PC-9 (cell line): ENCODE measurements at regions of chr1 and their contacts with region 1.

Region 1: DNA sequence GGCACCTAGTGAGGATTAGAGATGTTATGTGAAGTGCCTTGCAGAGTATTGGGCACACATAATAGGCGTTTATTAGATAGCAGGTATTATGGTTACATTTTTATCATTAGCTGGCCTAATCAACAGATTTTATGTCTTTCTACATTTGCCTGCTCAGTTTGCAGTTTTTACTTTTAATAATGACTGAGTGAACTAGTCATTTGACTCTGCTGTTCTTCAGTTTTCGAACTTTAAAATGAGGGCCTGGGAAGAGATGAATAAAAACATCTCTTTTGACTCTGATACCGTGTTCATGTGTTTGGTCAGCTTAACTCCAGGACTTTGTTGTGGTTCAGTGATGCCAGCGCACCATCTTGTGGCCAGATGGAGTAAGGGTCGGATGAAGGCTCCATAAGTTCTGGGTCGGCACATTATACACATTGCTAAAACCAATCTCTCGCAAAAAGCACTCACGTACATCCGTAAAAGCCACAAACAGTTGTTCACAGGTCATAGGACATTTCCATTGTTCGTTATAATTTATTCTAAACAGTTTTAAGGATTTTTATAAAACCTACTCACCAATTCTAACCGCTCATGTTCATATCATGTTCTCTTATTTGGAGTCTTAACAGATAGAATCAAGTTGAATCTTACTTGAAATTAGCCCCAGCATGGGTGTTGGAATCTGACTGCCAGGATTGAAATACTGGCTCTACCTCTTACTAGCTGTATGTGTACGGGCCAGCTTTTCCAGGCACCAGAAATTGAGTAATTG is 78.4 kb upstream of the GPR88 start:
- DNase-seq: peak; percentile 65 to 66
- H3K4me3 ChIP-seq: no peak overlapping the region
- H3K27ac ChIP-seq: no peak overlapping the region
- H3K4me1 ChIP-seq: no peaks in the 10 kb centered on the region
- H3K27me3 ChIP-seq: no peaks in the 10 kb centered on the region
- CTCF ChIP-seq: peak; percentile 94

Region 2: GRCh38 chr1:99808391-99809115 is 651.0 kb before region 1 on chr1:
- CTCF ChIA-PET with region 1: interaction called, 4 read pairs
- POLR2A ChIA-PET with region 1: no interaction called
- intact Hi-C with region 1: loop called (anchors 1 kb)
- DNase-seq: peak; percentile 27 to 83
- H3K4me3 ChIP-seq: peak overlapping the region; percentile 4; the same call in 1 of the 2 replicates
- H3K27ac ChIP-seq: no peak overlapping the region
- H3K4me1 ChIP-seq: no peaks in the 10 kb centered on the region; the same call in 1 of the 2 replicates
- H3K27me3 ChIP-seq: peaks cover 16% of the 10 kb centered on the region; the same call in 1 of the 2 replicates
- CTCF ChIP-seq: peak; percentile 92

Region 3: DNA sequence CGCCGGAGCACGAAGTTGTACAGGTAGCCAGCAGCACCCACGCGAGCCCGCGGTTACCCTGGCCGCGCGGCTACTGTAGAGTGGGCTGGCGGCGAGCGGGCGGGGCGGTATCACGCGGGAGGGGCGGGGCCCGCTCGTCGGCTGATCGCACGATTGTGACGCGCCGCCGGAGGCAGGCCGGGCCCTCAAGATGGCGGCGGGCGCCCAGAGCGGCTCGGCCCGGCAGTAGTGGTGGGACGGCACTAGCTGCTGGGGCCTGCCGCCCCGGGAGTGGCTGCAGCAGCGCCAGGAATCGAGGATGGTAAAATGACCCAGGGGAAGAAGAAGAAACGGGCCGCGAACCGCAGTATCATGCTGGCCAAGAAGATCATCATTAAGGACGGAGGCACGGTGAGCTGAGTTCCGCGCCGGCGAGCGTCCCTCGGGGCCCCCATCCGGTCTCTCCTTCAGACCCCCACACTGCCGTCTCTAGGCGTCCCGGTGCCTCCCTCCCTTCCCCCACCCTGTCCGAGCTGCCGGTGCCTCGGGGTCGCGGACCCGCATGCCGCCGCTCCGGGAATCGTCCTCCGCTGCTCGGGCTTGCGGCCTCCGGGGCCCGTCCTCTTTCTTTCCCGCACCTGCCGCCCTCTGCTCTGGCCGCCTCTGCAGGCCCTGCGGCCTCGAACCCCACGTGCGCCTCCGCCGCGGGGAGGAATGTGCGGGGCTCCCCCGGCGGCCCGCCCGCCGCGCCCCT is 421.4 kb before region 1 on chr1:
- CTCF ChIA-PET with region 1: interaction called, 3 read pairs
- POLR2A ChIA-PET with region 1: no interaction called
- intact Hi-C with region 1: loop called (anchors 2 kb)
- DNase-seq: peak; percentile 73 to 83
- H3K4me3 ChIP-seq: peak overlapping the region; percentile 90
- H3K27ac ChIP-seq: peak overlapping the region; percentile 84
- H3K4me1 ChIP-seq: peaks cover 33% of the 10 kb centered on the region
- H3K27me3 ChIP-seq: no peaks in the 10 kb centered on the region
- CTCF ChIP-seq: no peak; the same call in 1 of the 2 replicates

Region 4: GRCh38 chr1:100249537-100250257 is 209.8 kb before region 1 on chr1 and contains the start of gene DBT:
- CTCF ChIA-PET with region 1: no interaction called
- POLR2A ChIA-PET with region 1: no interaction called
- intact Hi-C with region 1: loop called (anchors 1 kb)
- DNase-seq: peak; percentile 91 to 97
- H3K4me3 ChIP-seq: peak within 1 kb of the TSS; percentile 62
- H3K27ac ChIP-seq: peak within 1 kb of the TSS; percentile 37
- H3K4me1 ChIP-seq: peaks cover 16% of the 10 kb centered on the region
- H3K27me3 ChIP-seq: no peaks in the 10 kb centered on the region
- CTCF ChIP-seq: no peak
- total RNA-seq, gene DBT: 13.9 and 16.0 TPM in 2 replicates

Region 5: GRCh38 chr1:100404821-100405220 is 54.7 kb before region 1 on chr1:
- CTCF ChIA-PET with region 1: no interaction called
- POLR2A ChIA-PET with region 1: interaction called, 15 read pairs
- intact Hi-C with region 1: no loop called
- DNase-seq: no peak
- H3K4me3 ChIP-seq: no peak overlapping the region
- H3K27ac ChIP-seq: no peak overlapping the region
- H3K4me1 ChIP-seq: no peaks in the 10 kb centered on the region
- H3K27me3 ChIP-seq: no peaks in the 10 kb centered on the region
- CTCF ChIP-seq: no peak

Region 6: GRCh38 chr1:100482167-100482566 is 22.6 kb after region 1 on chr1:
- CTCF ChIA-PET with region 1: no interaction called
- POLR2A ChIA-PET with region 1: no interaction called
- intact Hi-C with region 1: no loop called
- DNase-seq: no peak
- H3K4me3 ChIP-seq: no peak overlapping the region
- H3K27ac ChIP-seq: no peak overlapping the region
- H3K4me1 ChIP-seq: 0 out of 2 replicates have a peak, but pooled peaks cover 6% of the 10 kb centered on the region
- H3K27me3 ChIP-seq: no peaks in the 10 kb centered on the region
- CTCF ChIP-seq: no peak

Region 7: DNA sequence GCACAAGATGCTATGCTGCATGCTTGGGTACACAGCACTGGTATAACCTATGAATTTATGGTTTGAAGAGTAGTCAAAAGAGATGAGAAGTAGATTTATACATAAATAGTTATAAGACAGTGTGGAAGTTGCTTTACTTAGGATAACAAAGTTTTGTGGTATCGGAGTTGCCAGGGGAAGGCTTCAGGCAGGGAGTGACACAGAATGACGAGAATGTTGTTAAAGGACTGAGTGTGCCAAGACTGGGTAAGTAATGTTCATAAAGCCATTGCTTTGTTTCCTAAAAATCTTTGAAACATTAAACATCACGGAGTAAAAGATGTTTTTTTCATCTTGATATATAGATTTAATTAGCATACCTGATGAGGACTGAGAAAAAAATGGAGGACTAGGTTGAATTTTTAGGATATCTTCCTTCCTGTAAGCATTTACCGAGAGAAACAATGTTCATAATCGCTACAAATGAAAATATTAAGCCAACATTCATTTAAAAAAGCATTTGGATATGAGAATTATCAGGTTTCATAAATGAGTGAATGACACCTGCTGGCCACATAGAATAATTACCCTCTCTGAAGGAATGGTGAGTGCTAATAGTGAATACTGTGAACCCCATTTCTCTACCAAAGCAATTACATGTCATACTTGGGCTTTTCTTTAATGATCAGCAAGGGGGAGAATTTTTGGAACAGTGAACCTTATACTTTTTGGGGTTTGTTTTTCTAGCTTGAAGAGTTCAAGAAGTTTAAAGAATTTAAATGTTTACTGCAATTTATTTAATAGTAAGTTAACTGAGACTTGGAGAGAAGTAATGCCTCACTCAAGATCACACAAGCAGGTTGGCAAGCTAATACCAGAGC is 406.7 kb after region 1 on chr1:
- CTCF ChIA-PET with region 1: interaction called, 9 read pairs
- POLR2A ChIA-PET with region 1: no interaction called
- intact Hi-C with region 1: loop called (anchors 1 kb)
- DNase-seq: peak in 1 of 2 experiments; percentile 59
- H3K4me3 ChIP-seq: no peak overlapping the region
- H3K27ac ChIP-seq: no peak overlapping the region
- H3K4me1 ChIP-seq: 0 out of 2 replicates have a peak, but pooled peaks cover 4% of the 10 kb centered on the region
- H3K27me3 ChIP-seq: no peaks in the 10 kb centered on the region
- CTCF ChIP-seq: peak; percentile 91